ENCODE measurements at regions of chr11 and their contacts with region 1.

Region 1: DNA sequence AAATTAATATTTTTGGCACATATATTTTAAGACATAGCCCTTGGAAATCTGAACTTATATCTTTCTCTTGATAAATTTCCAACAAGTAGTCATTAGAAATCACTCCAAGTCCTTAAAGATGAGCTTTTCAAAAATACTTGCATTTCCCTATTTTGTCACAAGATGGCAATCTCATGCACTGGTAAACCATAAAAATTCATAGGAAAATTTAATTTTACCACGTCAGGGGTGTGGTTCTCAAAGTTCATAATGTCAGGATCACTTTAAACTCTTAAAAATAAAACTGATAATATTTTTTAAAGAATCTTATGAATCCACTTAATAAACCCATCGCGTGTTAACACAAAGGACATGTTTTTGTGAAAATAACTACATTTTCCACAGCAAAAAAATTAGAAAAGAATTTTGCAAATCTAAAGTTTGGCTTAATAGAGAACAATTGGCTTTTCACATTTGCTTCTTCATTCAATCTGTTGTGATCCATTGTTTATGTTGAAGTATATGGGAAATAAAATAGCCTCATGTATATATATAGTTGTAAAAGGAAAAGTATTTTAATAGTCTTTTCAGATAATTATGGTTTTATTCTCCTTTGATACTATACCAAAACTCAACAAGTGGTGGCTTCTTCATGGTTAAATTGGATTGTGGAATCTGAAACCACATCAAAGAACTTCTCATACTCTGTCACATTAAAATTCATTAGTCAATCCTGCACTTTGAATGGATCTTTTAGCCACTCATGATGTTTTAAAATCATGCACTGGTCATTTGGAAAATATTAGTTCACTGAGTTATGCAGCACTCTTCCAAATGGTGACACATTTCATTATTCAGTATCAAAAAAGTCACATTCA is 169.1 kb downstream of the CADM1 start:
- DNase-seq: no peak
- H3K4me3 ChIP-seq: no peak overlapping the region
- CTCF ChIP-seq: peak; percentile 42

Region 2: DNA sequence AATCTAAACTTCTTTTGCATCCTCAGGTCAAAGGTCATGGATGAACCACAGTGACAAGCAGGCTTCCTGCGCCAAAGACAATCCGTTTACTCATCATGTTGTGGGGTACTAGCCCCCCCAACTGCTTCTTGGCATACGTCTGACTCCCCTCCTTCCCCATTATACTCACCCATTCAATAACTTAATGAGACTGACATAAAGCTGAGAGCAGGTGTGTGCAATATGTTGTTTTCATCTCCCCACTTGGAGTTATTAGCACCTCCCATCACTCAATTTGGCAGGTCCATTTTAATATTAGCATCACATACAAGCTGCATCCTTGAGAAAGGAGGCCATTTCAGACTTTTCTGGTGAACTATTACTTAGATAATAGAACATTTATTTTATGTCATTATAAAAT is 12.0 kb after region 1 on chr11:
- CTCF ChIA-PET with region 1: interaction called, 12 read pairs
- POLR2A ChIA-PET with region 1: no interaction called
- DNase-seq: no peak
- H3K4me3 ChIP-seq: no peak overlapping the region
- CTCF ChIP-seq: no peak

Region 3: GRCh38 chr11:115504276-115505158 is 169.4 kb after region 1 on chr11 and contains the start of gene CADM1:
- CTCF ChIA-PET with region 1: interaction called, 46 read pairs
- POLR2A ChIA-PET with region 1: no interaction called
- DNase-seq: peak; percentile 52
- H3K4me3 ChIP-seq: peak within 1 kb of the TSS; percentile 89
- CTCF ChIP-seq: peak; percentile 75